IMR-90 (cell line): ENCODE measurements at regions of chr1 and their contacts with region 1.

Region 1: GRCh38 chr1:28613175-28613574 is 21.1 kb downstream of the RAB42 start:
- DNase-seq: no peak
- ATAC-seq: no peak
- H3K4me3 ChIP-seq: no peak overlapping the region
- H3K27ac ChIP-seq: no peak overlapping the region
- H3K4me1 ChIP-seq: no peaks in the 10 kb centered on the region
- H3K27me3 ChIP-seq: no peaks in the 10 kb centered on the region
- CTCF ChIP-seq: no peak
- POLR2A ChIP-seq: no peak
- RAD21 ChIP-seq: no peak

Region 2: DNA sequence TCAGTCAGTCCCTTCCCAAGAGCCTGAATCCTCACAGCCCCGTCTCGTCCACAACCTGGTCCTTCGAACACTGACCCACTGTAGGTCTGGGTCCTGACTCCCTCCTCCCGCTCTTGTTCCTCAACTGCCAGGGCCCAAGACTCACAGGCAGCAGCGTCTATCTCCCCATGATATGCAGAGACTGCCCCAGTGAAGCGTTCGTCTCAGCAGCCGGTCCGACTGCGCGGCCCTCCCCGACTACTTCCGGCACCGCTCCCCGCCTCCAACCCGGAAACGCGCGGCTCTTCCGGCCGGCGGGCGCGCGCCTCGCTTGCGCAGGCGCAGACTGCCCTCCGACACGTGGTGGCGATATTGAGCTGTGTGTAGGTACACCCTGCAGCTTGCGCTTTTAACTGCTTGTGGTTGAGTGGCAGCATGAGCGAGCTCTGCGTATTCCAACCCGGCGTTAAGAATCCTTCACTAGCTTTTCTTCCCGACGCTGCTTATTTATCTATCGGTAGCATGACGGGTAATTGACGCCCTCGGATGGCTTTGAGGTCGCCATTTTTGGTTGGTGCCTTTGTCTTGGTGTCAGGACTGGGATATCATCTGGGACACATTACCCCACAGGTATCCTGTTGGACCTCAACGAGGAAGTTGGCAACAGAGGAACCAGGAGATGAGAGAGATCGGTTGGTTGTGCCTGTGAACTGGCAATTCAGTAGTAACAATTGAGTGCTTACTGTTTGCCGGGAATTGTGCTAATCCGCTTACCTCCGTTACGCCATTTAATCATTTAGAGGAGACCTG is 29.9 kb after region 1 on chr1 and contains the start of gene TAF12:
- CTCF ChIA-PET with region 1: no interaction called
- POLR2A ChIA-PET with region 1: interaction called, 11 read pairs
- dilution Hi-C with region 1: no loop called
- in situ Hi-C with region 1: no loop called
- intact Hi-C with region 1: no loop called
- DNase-seq: peak; percentile 94
- ATAC-seq: peak; percentile 83
- H3K4me3 ChIP-seq: peak within 1 kb of the TSS; percentile 77
- H3K27ac ChIP-seq: peak within 1 kb of the TSS; percentile 94
- H3K4me1 ChIP-seq: peaks cover 1% of the 10 kb centered on the region
- H3K27me3 ChIP-seq: no peaks in the 10 kb centered on the region
- CTCF ChIP-seq: peak; percentile 51
- POLR2A ChIP-seq: peak; percentile 98
- RAD21 ChIP-seq: peak; percentile 44
- total RNA-seq, gene TAF12: 31.7 and 39.7 TPM in 2 replicates

Region 3: DNA sequence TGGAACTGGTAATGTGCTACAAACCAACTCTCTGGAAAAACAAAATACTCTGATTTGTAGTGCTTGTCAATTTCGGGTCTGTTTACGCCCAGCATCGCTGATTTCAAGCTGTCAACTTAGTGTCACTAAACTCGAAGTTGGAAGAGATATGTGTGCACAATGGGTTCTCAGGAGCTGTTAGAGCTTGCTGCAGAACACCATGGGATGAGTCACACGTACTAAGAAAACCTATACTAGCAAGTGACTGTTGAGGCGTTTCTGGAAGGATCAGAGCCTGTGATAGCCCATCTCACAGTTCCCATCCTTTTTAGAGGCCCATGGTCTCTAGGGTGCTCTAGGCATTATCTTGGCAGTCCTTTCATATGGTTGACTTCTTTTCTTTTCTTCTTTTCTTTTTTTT is 69.7 kb after region 1 on chr1:
- CTCF ChIA-PET with region 1: no interaction called
- POLR2A ChIA-PET with region 1: no interaction called
- dilution Hi-C with region 1: no loop called
- in situ Hi-C with region 1: no loop called
- intact Hi-C with region 1: no loop called
- DNase-seq: peak; percentile 31
- ATAC-seq: no peak
- H3K4me3 ChIP-seq: no peak overlapping the region
- H3K27ac ChIP-seq: no peak overlapping the region
- H3K4me1 ChIP-seq: peaks cover 4% of the 10 kb centered on the region
- H3K27me3 ChIP-seq: no peaks in the 10 kb centered on the region
- CTCF ChIP-seq: no peak
- POLR2A ChIP-seq: no peak
- RAD21 ChIP-seq: no peak